ENCODE measurements at regions of chr10 and their contacts with region 1.

Region 1: GRCh38 chr10:128064108-128064969 is 61.9 kb downstream of the MKI67 start:
- DNase-seq: peak; percentile 97 to 99 (median 99)
- H3K4me3 ChIP-seq: peak overlapping the region in 2 of 3 experiments; percentile 16 to 64
- H3K4me3 Mint-ChIP-seq: peak overlapping the region; percentile 73 to 82
- H3K27ac ChIP-seq: peak overlapping the region; percentile 97 to 100
- H3K27ac Mint-ChIP-seq: peak overlapping the region; percentile 98 to 100 (median 100)
- H3K4me1 ChIP-seq: peaks cover 68 to 81% of the 10 kb centered on the region in 2 donors
- H3K4me1 Mint-ChIP-seq: peaks cover 79% of the 10 kb centered on the region
- H3K27me3 ChIP-seq: no peaks in the 10 kb centered on the region
- H3K27me3 Mint-ChIP-seq: peaks cover 0 to 13% (median 5%) of the 10 kb centered on the region in 3 donors
- CTCF ChIP-seq: no peak

Region 2: DNA sequence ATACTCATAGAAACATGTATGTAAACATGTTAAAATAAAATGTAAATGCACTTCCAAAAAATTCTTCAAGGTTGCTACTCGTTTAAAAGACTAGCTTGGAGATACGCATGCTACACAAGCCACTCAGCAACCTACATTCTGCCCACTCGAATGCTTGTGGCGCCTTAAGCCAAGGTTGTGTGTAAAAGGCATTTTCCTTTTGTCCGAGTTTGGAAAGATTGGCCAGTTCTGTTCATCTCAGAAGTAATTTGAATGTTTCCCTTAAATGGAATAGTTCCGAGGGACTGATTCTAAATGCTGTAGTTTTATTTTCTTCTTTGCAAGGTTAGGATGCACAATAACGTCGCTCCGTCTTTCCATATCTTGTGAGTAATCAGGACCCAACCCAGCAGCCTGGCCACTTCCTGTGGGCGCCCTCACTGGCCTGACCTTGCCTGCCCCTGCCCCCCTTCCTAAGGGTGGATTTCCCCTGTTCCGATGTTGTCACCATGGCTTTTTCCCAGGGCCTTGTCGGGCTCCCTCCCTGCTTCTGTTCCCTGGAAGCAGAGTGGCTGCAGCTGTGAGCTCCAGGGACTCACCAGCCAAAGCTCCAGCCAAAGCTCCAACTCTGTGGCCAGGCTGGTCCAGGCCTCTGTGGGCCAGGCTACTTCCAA is 86.9 kb before region 1 on chr10:
- intact Hi-C with region 1: loop called in 1 of 2 experiments (anchors 5 kb)
- DNase-seq: peak; percentile 79 to 93 (median 79)
- H3K4me3 ChIP-seq: peak overlapping the region in 1 of 3 experiments; percentile 50
- H3K4me3 Mint-ChIP-seq: peak overlapping the region; percentile 48 to 79
- H3K27ac ChIP-seq: peak overlapping the region; percentile 7 to 72
- H3K27ac Mint-ChIP-seq: peak overlapping the region; percentile 76 to 95 (median 85)
- H3K4me1 ChIP-seq: peaks cover 66 to 72% of the 10 kb centered on the region in 2 donors
- H3K4me1 Mint-ChIP-seq: peaks cover 71% of the 10 kb centered on the region
- H3K27me3 ChIP-seq: no peaks in the 10 kb centered on the region
- H3K27me3 Mint-ChIP-seq: peaks cover 0 to 1% (median 0%) of the 10 kb centered on the region in 3 donors
- CTCF ChIP-seq: no peak

Region 3: GRCh38 chr10:128047351-128047750 is 17.0 kb before region 1 on chr10:
- intact Hi-C with region 1: loop called (anchors 1 to 2 kb)
- DNase-seq: peak; percentile 92
- H3K4me3 ChIP-seq: peak overlapping the region; percentile 77 to 100 (median 95)
- H3K4me3 Mint-ChIP-seq: peak overlapping the region; percentile 96 to 99
- H3K27ac ChIP-seq: peak overlapping the region; percentile 94 to 98
- H3K27ac Mint-ChIP-seq: peak overlapping the region; percentile 97 to 100 (median 98)
- H3K4me1 ChIP-seq: peaks cover 61 to 73% of the 10 kb centered on the region in 2 donors
- H3K4me1 Mint-ChIP-seq: peaks cover 60% of the 10 kb centered on the region
- H3K27me3 ChIP-seq: no peaks in the 10 kb centered on the region
- H3K27me3 Mint-ChIP-seq: peaks cover 0 to 12% (median 0%) of the 10 kb centered on the region in 3 donors
- CTCF ChIP-seq: no peak

Measured in CD14-positive monocyte (primary cell).